Activated naive CD4-positive, alpha-beta T cell treated with anti-CD3 and anti-CD28 coated beads for 36 hours (primary cell): ENCODE measurements at regions of chr11 and their contacts with region 1.

Region 1: GRCh38 chr11:128039140-128040021 is 548.0 kb downstream of the ETS1 start:
- DNase-seq: peak; percentile 89
- H3K4me3 Mint-ChIP-seq: peak overlapping the region; percentile 40
- H3K27ac Mint-ChIP-seq: peak overlapping the region; percentile 92
- H3K4me1 Mint-ChIP-seq: peaks cover 47% of the 10 kb centered on the region
- H3K27me3 Mint-ChIP-seq: no peaks in the 10 kb centered on the region

Region 2: DNA sequence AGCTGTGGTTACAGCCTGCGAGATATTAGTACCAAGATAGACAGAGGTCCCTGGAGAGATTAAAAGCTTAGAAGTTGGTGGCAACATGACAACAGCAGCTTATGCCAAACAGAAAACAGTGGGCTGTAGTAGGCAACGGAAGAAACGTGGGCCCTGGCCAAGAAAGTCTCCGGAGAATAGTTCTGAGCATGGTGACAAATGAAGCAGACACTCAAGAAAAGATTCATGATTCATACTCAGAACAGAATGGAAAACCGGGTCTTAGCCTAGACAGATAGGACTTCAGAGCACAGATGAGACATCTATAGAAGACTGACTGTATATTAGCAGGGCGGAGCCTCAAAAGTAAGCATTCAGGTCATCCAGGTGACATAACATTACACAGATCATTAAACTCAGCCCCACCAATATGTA is 179.4 kb before region 1 on chr11:
- CTCF ChIA-PET with region 1: no interaction called
- intact Hi-C with region 1: no loop called
- DNase-seq: no peak
- H3K4me3 Mint-ChIP-seq: no peak overlapping the region
- H3K27ac Mint-ChIP-seq: no peak overlapping the region
- H3K4me1 Mint-ChIP-seq: no peaks in the 10 kb centered on the region
- H3K27me3 Mint-ChIP-seq: peaks cover 9% of the 10 kb centered on the region

Region 3: GRCh38 chr11:128021349-128022006 is 17.9 kb before region 1 on chr11:
- CTCF ChIA-PET with region 1: interaction called, 3 read pairs
- intact Hi-C with region 1: loop called (anchors 1 kb)
- DNase-seq: no peak
- H3K4me3 Mint-ChIP-seq: no peak overlapping the region
- H3K27ac Mint-ChIP-seq: no peak overlapping the region
- H3K4me1 Mint-ChIP-seq: peaks cover 5% of the 10 kb centered on the region
- H3K27me3 Mint-ChIP-seq: no peaks in the 10 kb centered on the region

Region 4: GRCh38 chr11:128052912-128053641 is 13.7 kb after region 1 on chr11:
- CTCF ChIA-PET with region 1: interaction called, 33 read pairs
- intact Hi-C with region 1: loop called (anchors 1 kb)
- DNase-seq: no peak
- H3K4me3 Mint-ChIP-seq: peak overlapping the region; percentile 49
- H3K27ac Mint-ChIP-seq: peak overlapping the region; percentile 86
- H3K4me1 Mint-ChIP-seq: peaks cover 67% of the 10 kb centered on the region
- H3K27me3 Mint-ChIP-seq: no peaks in the 10 kb centered on the region

Region 5: GRCh38 chr11:128086794-128087193 is 47.4 kb after region 1 on chr11:
- CTCF ChIA-PET with region 1: interaction called, 12 read pairs
- intact Hi-C with region 1: loop called (anchors 2 kb)
- DNase-seq: no peak
- H3K4me3 Mint-ChIP-seq: no peak overlapping the region
- H3K27ac Mint-ChIP-seq: no peak overlapping the region
- H3K4me1 Mint-ChIP-seq: peaks cover 44% of the 10 kb centered on the region
- H3K27me3 Mint-ChIP-seq: no peaks in the 10 kb centered on the region

Region 6: DNA sequence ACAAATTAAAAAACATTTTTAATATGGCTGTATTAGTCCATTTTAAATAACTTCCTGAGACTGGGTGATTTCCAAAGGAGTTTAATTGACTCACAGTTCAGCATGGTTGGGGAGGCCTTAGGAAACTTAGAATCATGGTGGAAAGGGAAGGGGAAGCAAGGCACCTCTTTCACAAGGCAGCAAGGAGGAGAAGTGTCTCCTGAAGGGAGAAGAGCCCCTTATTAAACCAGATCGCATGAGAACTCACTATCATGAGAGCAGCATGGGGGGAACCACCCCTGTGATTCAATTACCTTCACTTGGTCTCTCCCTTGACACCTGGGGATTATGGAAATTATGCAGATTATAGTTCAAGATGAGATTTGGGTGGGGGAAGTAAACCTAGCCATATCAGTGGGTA is 59.4 kb after region 1 on chr11:
- CTCF ChIA-PET with region 1: interaction called, 3 read pairs
- intact Hi-C with region 1: loop called (anchors 1 kb)
- DNase-seq: peak; percentile 9
- H3K4me3 Mint-ChIP-seq: no peak overlapping the region
- H3K27ac Mint-ChIP-seq: peak overlapping the region; percentile 76
- H3K4me1 Mint-ChIP-seq: peaks cover 39% of the 10 kb centered on the region
- H3K27me3 Mint-ChIP-seq: no peaks in the 10 kb centered on the region

Region 7: DNA sequence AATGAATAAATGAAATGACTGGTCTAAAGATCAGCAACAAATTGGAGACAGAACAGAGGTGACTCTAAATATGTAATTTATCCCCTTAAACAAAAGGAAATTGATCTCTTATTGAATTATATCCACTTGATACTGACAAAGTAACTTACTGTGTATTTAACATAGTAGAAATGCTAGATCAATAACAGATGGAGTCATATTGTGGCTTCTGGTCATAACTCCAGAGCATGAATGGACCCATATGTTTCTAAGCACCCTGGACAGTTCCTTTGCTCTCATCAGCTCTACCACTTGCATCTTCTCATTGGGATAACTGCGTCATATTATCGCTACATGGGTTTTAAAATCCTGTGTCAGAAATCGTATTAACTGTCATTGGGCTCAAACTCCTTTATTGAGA is 325.7 kb after region 1 on chr11:
- CTCF ChIA-PET with region 1: no interaction called
- intact Hi-C with region 1: no loop called
- DNase-seq: peak; percentile 31
- H3K4me3 Mint-ChIP-seq: no peak overlapping the region
- H3K27ac Mint-ChIP-seq: no peak overlapping the region
- H3K4me1 Mint-ChIP-seq: peaks cover 11% of the 10 kb centered on the region
- H3K27me3 Mint-ChIP-seq: no peaks in the 10 kb centered on the region

Region 8: GRCh38 chr11:128422576-128423370 is 383.4 kb after region 1 on chr11:
- CTCF ChIA-PET with region 1: no interaction called
- intact Hi-C with region 1: loop called (anchors 1 kb)
- DNase-seq: peak; percentile 96
- H3K4me3 Mint-ChIP-seq: peak overlapping the region; percentile 44
- H3K27ac Mint-ChIP-seq: peak overlapping the region; percentile 75
- H3K4me1 Mint-ChIP-seq: peaks cover 63% of the 10 kb centered on the region
- H3K27me3 Mint-ChIP-seq: no peaks in the 10 kb centered on the region

Region 9: DNA sequence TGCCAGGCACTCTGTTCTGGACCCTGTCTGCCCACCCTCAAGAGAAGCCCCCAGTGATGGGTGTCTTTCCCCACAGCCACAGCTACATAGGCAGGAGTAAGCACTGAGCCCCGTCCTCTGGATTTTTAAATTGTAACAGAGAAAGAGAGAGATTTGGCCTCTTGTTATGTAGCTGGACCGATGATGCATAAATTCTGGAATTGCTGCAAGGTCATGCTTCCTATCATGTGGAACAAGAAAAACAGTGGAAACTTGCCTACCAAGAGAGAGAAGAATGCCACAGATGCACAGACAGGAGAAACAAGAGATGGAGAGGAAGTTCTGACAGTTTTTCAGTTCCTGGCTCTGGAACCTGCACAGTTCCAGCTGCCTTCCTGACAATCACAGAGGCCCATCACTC is 397.8 kb after region 1 on chr11:
- CTCF ChIA-PET with region 1: no interaction called
- intact Hi-C with region 1: no loop called
- DNase-seq: no peak
- H3K4me3 Mint-ChIP-seq: no peak overlapping the region
- H3K27ac Mint-ChIP-seq: no peak overlapping the region
- H3K4me1 Mint-ChIP-seq: peaks cover 6% of the 10 kb centered on the region
- H3K27me3 Mint-ChIP-seq: no peaks in the 10 kb centered on the region

Region 10: DNA sequence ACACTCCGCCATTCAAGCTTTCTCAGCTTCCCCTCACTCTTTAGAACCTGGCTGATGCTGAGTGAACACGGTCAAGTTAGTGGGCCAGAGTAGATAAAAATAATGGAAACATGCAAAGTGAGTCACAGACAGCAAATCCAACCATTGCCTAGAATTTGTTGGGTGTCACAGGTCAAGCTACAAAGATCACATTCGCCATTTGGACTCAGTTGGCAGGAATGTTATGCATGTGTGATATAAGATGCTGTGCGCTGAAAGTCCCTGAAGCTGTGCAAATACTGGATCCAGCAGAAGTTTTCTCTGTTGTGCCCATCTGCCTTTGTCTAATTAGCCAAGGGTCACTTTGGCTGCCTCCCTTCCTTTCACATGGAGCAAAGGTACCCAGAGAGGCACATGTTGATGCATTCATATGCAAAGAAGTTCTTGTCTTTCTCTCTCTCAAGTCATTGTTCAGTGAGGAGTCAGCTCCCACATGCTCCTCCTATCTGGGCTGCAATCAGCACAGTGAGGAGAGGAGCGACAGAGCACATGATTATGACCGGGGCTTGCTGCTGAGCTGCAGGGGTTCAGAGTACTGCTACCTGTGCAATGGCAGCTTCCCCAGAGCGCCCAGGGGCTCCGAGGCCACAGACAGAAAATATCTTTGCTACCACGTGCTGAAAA is 694.2 kb after region 1 on chr11:
- CTCF ChIA-PET with region 1: no interaction called
- intact Hi-C with region 1: loop called (anchors 2 kb)
- DNase-seq: peak; percentile 58
- H3K4me3 Mint-ChIP-seq: peak overlapping the region; percentile 65
- H3K27ac Mint-ChIP-seq: peak overlapping the region; percentile 32
- H3K4me1 Mint-ChIP-seq: peaks cover 93% of the 10 kb centered on the region
- H3K27me3 Mint-ChIP-seq: no peaks in the 10 kb centered on the region